ENCODE measurements at regions of chr2 and their contacts with region 1.

Region 1: DNA sequence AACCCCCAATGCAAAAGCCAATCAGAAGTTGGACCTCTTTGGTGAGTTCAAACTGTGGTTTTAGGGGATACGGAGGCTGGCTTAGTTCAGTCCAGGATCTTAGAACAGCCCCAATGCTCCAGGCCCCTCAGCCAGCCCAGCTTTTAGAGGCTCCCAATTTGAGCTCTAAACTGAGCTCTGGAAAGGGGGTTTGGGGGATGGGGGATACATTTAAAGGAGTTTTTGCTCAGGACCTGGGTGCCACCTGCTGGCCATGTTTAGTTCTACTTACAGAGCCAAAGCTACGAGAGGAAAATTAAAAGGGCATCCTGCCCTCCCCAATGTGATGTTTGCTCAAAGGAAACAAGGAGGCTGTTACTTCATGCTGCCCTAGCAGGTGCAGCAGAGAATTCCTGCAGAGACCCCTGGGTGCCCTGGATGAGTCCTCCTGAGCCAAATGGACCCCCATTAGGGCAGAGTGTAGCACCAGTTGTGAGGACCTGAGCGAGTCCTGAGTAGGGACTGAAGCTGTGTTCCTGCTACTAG is 15.9 kb upstream of the TMEM214 start:
- DNase-seq: peak; percentile 53 to 56
- H3K4me3 ChIP-seq: no peak overlapping the region
- H3K27ac ChIP-seq: peak overlapping the region; percentile 85; the same call in 1 of the 2 replicates
- H3K4me1 ChIP-seq: peaks cover 61% of the 10 kb centered on the region
- H3K27me3 ChIP-seq: no peaks in the 10 kb centered on the region
- CTCF ChIP-seq: peak; percentile 95

Region 2: DNA sequence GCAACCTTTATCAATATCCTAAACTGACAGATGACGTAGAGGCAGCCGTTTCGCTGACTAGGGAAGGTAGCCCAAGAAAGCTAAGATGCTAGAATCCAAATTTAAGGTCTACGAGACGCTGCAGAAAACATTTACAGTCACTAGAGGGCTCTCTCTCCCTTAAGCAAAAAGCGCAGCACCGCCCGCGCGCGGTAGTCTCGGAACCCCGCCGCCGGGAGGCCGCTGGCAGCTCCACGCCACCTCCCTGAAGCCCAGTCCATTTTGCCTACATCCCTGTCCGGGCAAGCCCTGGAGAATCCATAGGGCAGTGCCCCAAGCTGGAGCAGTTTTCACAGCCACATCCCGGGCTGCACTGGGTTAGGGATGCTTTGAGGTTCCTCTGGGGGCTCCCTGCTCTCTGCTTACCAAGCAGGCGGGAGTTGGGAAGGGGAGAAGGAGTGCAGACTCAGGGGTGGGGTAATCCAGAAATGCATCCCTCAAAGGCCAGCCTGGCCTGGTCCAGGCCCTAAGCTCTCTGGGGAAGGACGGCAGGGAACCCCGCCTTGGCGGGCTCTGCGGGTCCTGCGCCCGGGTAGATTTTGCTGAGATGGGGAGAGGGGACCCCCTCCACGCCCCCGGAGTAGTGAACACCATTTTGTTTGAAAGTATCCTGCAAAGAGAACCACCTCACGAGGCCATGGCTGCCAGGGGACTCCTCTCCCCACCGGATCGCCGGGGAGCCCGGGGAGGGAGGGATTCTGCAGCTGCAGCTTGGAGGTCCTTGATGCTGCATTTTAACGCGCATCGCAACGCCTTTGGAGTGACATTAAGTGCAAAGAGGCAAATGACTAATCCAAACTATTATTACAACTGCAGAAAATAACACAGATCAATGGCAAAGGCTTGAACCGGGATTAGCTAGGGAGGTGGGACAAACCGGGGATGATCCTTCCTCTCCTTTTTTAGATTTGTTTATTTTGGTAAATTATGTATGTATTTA is 170.2 kb before region 1 on chr2:
- CTCF ChIA-PET with region 1: interaction called, 16 read pairs
- POLR2A ChIA-PET with region 1: no interaction called
- intact Hi-C with region 1: loop called (anchors 1 kb)
- DNase-seq: peak; percentile 57
- H3K4me3 ChIP-seq: no peak overlapping the region
- H3K27ac ChIP-seq: no peak overlapping the region
- H3K4me1 ChIP-seq: no peaks in the 10 kb centered on the region
- H3K27me3 ChIP-seq: peaks cover 25% of the 10 kb centered on the region
- CTCF ChIP-seq: peak; percentile 83

Region 3: GRCh38 chr2:26970244-26970920 is 46.5 kb before region 1 on chr2 and contains the start of gene MAPRE3:
- CTCF ChIA-PET with region 1: interaction called, 16 read pairs
- POLR2A ChIA-PET with region 1: no interaction called
- intact Hi-C with region 1: no loop called
- DNase-seq: peak; percentile 73 to 83
- H3K4me3 ChIP-seq: peak within 1 kb of the TSS; percentile 63
- H3K27ac ChIP-seq: no peak within 1 kb of the TSS
- H3K4me1 ChIP-seq: peaks cover 45% of the 10 kb centered on the region
- H3K27me3 ChIP-seq: no peaks in the 10 kb centered on the region
- CTCF ChIP-seq: no peak
- total RNA-seq, gene MAPRE3: 17.1 and 25.2 TPM in 2 replicates

Region 4: GRCh38 chr2:27050281-27050995 is 33.6 kb after region 1 on chr2:
- CTCF ChIA-PET with region 1: interaction called, 3 read pairs
- POLR2A ChIA-PET with region 1: no interaction called
- intact Hi-C with region 1: loop called (anchors 1 kb)
- DNase-seq: peak; percentile 93 to 95
- H3K4me3 ChIP-seq: peak overlapping the region; percentile 98
- H3K27ac ChIP-seq: peak overlapping the region; percentile 70
- H3K4me1 ChIP-seq: peaks cover 14% of the 10 kb centered on the region
- H3K27me3 ChIP-seq: no peaks in the 10 kb centered on the region
- CTCF ChIP-seq: peak; percentile 28; the same call in 1 of the 2 replicates

Region 5: GRCh38 chr2:27322766-27323595 is 306.1 kb after region 1 on chr2 and contains the start of gene MPV17:
- CTCF ChIA-PET with region 1: no interaction called
- POLR2A ChIA-PET with region 1: interaction called, 11 read pairs
- intact Hi-C with region 1: no loop called
- DNase-seq: peak; percentile 89 to 93
- H3K4me3 ChIP-seq: peak within 1 kb of the TSS; percentile 82
- H3K27ac ChIP-seq: peak within 1 kb of the TSS; percentile 69
- H3K4me1 ChIP-seq: peaks cover 28% of the 10 kb centered on the region
- H3K27me3 ChIP-seq: no peaks in the 10 kb centered on the region
- CTCF ChIP-seq: no peak
- total RNA-seq, gene MPV17: 42.2 and 47.5 TPM in 2 replicates

Region 6: GRCh38 chr2:27390822-27391679 is 374.2 kb after region 1 on chr2:
- CTCF ChIA-PET with region 1: no interaction called
- POLR2A ChIA-PET with region 1: no interaction called
- intact Hi-C with region 1: no loop called
- DNase-seq: no peak
- H3K4me3 ChIP-seq: no peak overlapping the region
- H3K27ac ChIP-seq: no peak overlapping the region
- H3K4me1 ChIP-seq: no peaks in the 10 kb centered on the region
- H3K27me3 ChIP-seq: no peaks in the 10 kb centered on the region
- CTCF ChIP-seq: no peak